ENCODE measurements at regions of chr15 and their contacts with region 1.

Region 1: GRCh38 chr15:74322181-74323076 is 45.0 kb downstream of the CYP11A1 start:
- DNase-seq: peak; percentile 78
- ATAC-seq: peak; percentile 83
- H3K4me3 Mint-ChIP-seq: no peak overlapping the region
- H3K27ac Mint-ChIP-seq: no peak overlapping the region
- H3K4me1 Mint-ChIP-seq: peaks cover 45% of the 10 kb centered on the region
- H3K27me3 Mint-ChIP-seq: no peaks in the 10 kb centered on the region

Region 2: DNA sequence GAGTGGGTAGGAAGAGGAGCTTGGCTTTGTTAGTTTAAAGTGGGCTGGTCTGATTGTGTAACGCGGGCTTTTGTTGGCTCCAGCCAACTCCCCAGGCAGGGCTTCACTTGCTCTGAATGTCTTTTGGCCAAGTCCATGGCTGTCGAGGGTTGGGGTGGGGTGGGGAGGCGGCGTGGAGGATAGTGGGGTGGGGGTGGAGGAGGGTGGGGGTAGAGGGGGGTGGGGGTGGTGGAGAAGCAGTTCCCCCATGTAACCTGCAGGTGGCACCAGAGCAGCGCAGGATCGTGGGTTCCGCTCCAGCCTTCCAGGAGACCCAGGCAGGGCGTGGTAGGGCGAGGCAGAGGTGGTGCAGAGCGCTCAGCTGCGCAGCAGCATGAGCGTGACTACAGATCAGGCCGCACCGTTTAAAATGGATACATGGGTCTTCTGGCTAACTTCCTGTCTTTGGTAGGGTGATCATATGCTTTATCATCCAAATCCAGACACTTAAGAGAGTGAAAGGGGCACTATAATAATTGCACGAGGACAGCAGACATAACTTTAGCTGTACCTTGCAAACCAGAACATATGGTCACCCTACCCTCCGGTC is 268.4 kb before region 1 on chr15:
- CTCF ChIA-PET with region 1: interaction called, 15 read pairs
- POLR2A ChIA-PET with region 1: no interaction called
- DNase-seq: peak; percentile 84
- ATAC-seq: peak; percentile 98
- H3K4me3 Mint-ChIP-seq: no peak overlapping the region
- H3K27ac Mint-ChIP-seq: peak overlapping the region; percentile 20
- H3K4me1 Mint-ChIP-seq: peaks cover 12% of the 10 kb centered on the region
- H3K27me3 Mint-ChIP-seq: peaks cover 8% of the 10 kb centered on the region

Region 3: GRCh38 chr15:74127260-74127953 is 195.0 kb before region 1 on chr15:
- CTCF ChIA-PET with region 1: interaction called, 26 read pairs
- POLR2A ChIA-PET with region 1: interaction called, 3 read pairs
- DNase-seq: peak; percentile 90
- ATAC-seq: peak; percentile 96
- H3K4me3 Mint-ChIP-seq: no peak overlapping the region
- H3K27ac Mint-ChIP-seq: no peak overlapping the region
- H3K4me1 Mint-ChIP-seq: peaks cover 26% of the 10 kb centered on the region
- H3K27me3 Mint-ChIP-seq: peaks cover 56% of the 10 kb centered on the region

Region 4: GRCh38 chr15:74302821-74303359 is 19.5 kb before region 1 on chr15:
- CTCF ChIA-PET with region 1: interaction called, 119 read pairs
- POLR2A ChIA-PET with region 1: no interaction called
- DNase-seq: peak; percentile 61
- ATAC-seq: peak; percentile 55
- H3K4me3 Mint-ChIP-seq: no peak overlapping the region
- H3K27ac Mint-ChIP-seq: no peak overlapping the region
- H3K4me1 Mint-ChIP-seq: no peaks in the 10 kb centered on the region
- H3K27me3 Mint-ChIP-seq: peaks cover 44% of the 10 kb centered on the region

Region 5: GRCh38 chr15:74307827-74308644 is 14.4 kb before region 1 on chr15:
- CTCF ChIA-PET with region 1: interaction called, 119 read pairs
- POLR2A ChIA-PET with region 1: interaction called, 3 read pairs
- DNase-seq: peak; percentile 68
- ATAC-seq: peak; percentile 84
- H3K4me3 Mint-ChIP-seq: no peak overlapping the region
- H3K27ac Mint-ChIP-seq: no peak overlapping the region
- H3K4me1 Mint-ChIP-seq: peaks cover 3% of the 10 kb centered on the region
- H3K27me3 Mint-ChIP-seq: peaks cover 26% of the 10 kb centered on the region

Measured in activated CD8-positive, alpha-beta T cell treated with anti-CD3 and anti-CD28 coated beads, Interleukin-2, amount 10 ng/mL, durations not matched to agents 7 days and 5 days (primary cell).